ENCODE measurements at regions of chr5 and their contacts with region 1.

Region 1: GRCh38 chr5:86679529-86679928 is 61.8 kb downstream of the COX7C start:
- DNase-seq: peak; percentile 11 to 41 (median 26)
- ATAC-seq: peak; percentile 86
- H3K4me3 ChIP-seq: no peak overlapping the region
- H3K27ac ChIP-seq: no peak overlapping the region
- H3K4me1 ChIP-seq: no peaks in the 10 kb centered on the region
- H3K27me3 ChIP-seq: no peaks in the 10 kb centered on the region
- CTCF ChIP-seq: peak; percentile 36 to 78 (median 64); a peak in 5 of 6 replicates
- EP300 ChIP-seq: no peak
- POLR2A ChIP-seq: no peak
- RAD21 ChIP-seq: peak; percentile 85 to 91

Region 2: GRCh38 chr5:86463339-86463738 is 216.2 kb before region 1 on chr5:
- CTCF ChIA-PET with region 1: no interaction called
- POLR2A ChIA-PET with region 1: no interaction called
- in situ Hi-C with region 1: no loop called
- intact Hi-C with region 1: loop called (anchors 1 kb)
- DNase-seq: peak; percentile 15 to 22 (median 20)
- ATAC-seq: peak; percentile 79
- H3K4me3 ChIP-seq: no peak overlapping the region
- H3K27ac ChIP-seq: no peak overlapping the region
- H3K4me1 ChIP-seq: no peaks in the 10 kb centered on the region
- H3K27me3 ChIP-seq: no peaks in the 10 kb centered on the region
- CTCF ChIP-seq: peak; percentile 41 to 57 (median 43); a peak in 5 of 6 replicates
- EP300 ChIP-seq: no peak
- POLR2A ChIP-seq: no peak
- RAD21 ChIP-seq: peak in 1 of 2 experiments; percentile 51; a peak in 2 of 4 replicates

Region 3: DNA sequence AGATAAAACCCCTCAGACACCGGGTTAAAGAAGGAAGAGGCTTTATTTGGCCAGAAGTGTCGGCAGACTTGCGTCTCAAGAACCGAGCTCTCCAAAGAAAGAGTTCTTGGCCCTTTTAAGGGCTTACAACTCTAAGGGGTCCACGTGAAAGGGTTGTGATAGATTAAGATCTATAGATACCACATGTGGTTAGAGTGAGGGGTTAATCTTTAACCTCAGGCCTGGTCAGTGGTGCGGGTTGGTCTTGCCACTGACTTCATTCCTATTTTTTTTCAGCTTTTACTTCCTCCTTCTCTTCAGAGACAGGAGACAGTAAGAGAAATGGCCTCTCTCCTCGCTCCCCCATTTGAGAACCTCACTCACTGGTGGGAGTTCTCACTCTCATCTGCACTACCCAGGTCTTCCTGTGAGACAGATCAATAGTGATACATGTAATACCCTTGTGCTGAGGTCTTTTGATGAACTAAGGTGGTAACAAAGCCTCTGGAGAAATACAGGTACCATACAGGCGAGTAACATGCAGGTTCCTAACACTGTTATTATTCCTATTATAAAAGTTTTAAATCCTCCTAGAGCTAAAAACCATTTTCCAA is 114.2 kb before region 1 on chr5:
- CTCF ChIA-PET with region 1: no interaction called
- POLR2A ChIA-PET with region 1: no interaction called
- in situ Hi-C with region 1: no loop called
- intact Hi-C with region 1: loop called (anchors 5 kb)
- DNase-seq: no peak
- ATAC-seq: no peak
- H3K4me3 ChIP-seq: no peak overlapping the region
- H3K27ac ChIP-seq: no peak overlapping the region
- H3K4me1 ChIP-seq: peaks cover 7 to 8% of the 10 kb centered on the region in 2 experiments; a peak in 3 of 5 replicates
- H3K27me3 ChIP-seq: no peaks in the 10 kb centered on the region
- CTCF ChIP-seq: no peak
- EP300 ChIP-seq: no peak
- POLR2A ChIP-seq: no peak
- RAD21 ChIP-seq: no peak

Region 4: GRCh38 chr5:87103596-87104287 is 424.2 kb after region 1 on chr5:
- CTCF ChIA-PET with region 1: no interaction called
- POLR2A ChIA-PET with region 1: no interaction called
- in situ Hi-C with region 1: no loop called
- intact Hi-C with region 1: no loop called
- DNase-seq: no peak
- ATAC-seq: no peak
- H3K4me3 ChIP-seq: no peak overlapping the region
- H3K27ac ChIP-seq: no peak overlapping the region
- H3K4me1 ChIP-seq: no peaks in the 10 kb centered on the region
- H3K27me3 ChIP-seq: no peaks in the 10 kb centered on the region
- CTCF ChIP-seq: no peak
- EP300 ChIP-seq: no peak
- POLR2A ChIP-seq: no peak
- RAD21 ChIP-seq: no peak

Measured in K562 (cell line).